ENCODE measurements at regions of chr18 and their contacts with region 1.

Region 1: DNA sequence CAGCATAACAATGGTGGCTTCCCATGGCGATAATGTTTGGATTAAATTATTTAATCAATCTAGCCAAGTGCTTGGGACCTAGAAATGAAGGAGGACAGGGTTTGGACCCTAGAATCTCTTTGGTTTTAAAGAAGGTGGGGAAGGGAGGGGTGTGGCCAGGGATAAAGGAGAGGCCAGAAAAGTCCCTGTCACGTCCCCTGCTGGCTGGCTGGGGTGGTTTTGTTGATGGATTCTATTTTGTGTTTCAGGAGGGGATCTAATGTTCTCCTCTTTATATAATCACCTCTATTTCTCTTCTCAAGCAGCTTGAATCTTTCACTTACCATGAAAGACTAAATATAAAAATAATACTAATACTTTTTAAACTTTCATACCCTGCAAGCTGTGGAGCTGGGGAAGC is 52.6 kb upstream of the GALR1 start:
- DNase-seq: no peak
- H3K4me3 ChIP-seq: no peak overlapping the region
- CTCF ChIP-seq: no peak

Region 2: GRCh38 chr18:77061946-77062517 is 135.0 kb before region 1 on chr18:
- in situ Hi-C with region 1: loop called (anchors 5 kb)
- DNase-seq: no peak
- H3K4me3 ChIP-seq: no peak overlapping the region
- CTCF ChIP-seq: no peak